WTC11 (cell line): ENCODE measurements at regions of chr5 and their contacts with region 1.

Region 1: GRCh38 chr5:31232273-31232888 is 38.9 kb downstream of the CDH6 start:
- DNase-seq: peak; percentile 14
- ATAC-seq: peak; percentile 89
- H3K4me3 Mint-ChIP-seq: no peak overlapping the region
- H3K27ac Mint-ChIP-seq: no peak overlapping the region
- H3K4me1 Mint-ChIP-seq: peaks cover 16% of the 10 kb centered on the region
- H3K27me3 Mint-ChIP-seq: no peaks in the 10 kb centered on the region
- CTCF ChIP-seq: peak; percentile 33; the same call in 1 of the 2 replicates

Region 2: GRCh38 chr5:31218978-31219377 is 13.4 kb before region 1 on chr5:
- CTCF ChIA-PET with region 1: interaction called, 10 read pairs
- POLR2A ChIA-PET with region 1: no interaction called
- DNase-seq: no peak
- ATAC-seq: peak; percentile 72
- H3K4me3 Mint-ChIP-seq: no peak overlapping the region
- H3K27ac Mint-ChIP-seq: no peak overlapping the region
- H3K4me1 Mint-ChIP-seq: 0 out of 2 replicates have a peak, but pooled peaks cover 10% of the 10 kb centered on the region
- H3K27me3 Mint-ChIP-seq: no peaks in the 10 kb centered on the region
- CTCF ChIP-seq: no peak

Region 3: DNA sequence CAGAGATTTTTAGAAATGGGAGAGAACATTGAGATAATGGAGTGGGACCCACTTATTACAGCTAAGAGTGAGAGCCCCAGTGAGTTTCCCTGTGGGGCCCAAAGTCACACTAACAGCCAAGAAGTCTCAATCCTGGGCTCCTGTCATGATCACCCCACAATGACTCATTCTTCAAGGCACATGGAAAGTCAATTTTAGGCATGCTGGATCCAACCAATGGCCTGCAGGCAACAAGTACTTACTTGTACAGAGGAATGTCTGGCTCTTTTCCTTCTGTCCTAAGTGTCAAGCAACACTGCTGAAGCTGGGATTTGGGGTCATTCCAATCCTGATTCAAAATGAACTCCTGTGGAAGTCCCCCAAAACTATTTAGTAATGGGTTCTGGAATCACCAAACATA is 176.4 kb after region 1 on chr5:
- CTCF ChIA-PET with region 1: no interaction called
- POLR2A ChIA-PET with region 1: no interaction called
- DNase-seq: no peak
- ATAC-seq: no peak
- H3K4me3 Mint-ChIP-seq: no peak overlapping the region
- H3K27ac Mint-ChIP-seq: no peak overlapping the region
- H3K4me1 Mint-ChIP-seq: peaks cover 3% of the 10 kb centered on the region; the same call in 1 of the 2 replicates
- H3K27me3 Mint-ChIP-seq: no peaks in the 10 kb centered on the region
- CTCF ChIP-seq: no peak